ENCODE measurements at regions of chrX and their contacts with region 1.

Region 1: GRCh38 chrX:14883826-14884225 is 10.6 kb downstream of the MOSPD2 start:
- DNase-seq: no peak
- ATAC-seq: no peak
- H3K4me3 ChIP-seq: no peak overlapping the region
- H3K27ac ChIP-seq: no peak overlapping the region
- H3K4me1 ChIP-seq: no peaks in the 10 kb centered on the region
- H3K27me3 ChIP-seq: no peaks in the 10 kb centered on the region
- CTCF ChIP-seq: no peak

Region 2: DNA sequence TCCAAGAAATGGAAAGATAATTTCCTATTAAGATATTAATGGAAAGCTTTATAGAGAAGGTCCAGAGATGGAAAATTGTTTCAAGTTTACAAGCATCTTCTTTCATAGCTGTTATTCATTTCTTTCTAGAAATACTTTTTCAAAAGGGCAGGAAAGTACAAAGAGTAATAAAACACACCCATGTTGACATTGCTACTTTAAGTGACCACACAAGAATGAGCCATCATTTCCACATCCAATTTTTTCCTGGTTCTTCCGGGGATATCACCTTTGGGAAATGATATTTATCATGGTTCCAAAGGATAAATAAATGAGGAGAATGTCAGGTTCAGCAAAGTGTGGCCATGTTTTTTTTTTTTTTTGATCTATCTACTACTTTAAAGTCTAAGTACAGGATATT is 350.0 kb before region 1 on chrX:
- intact Hi-C with region 1: loop called in 1 of 2 experiments (anchors 5 kb)
- DNase-seq: no peak
- ATAC-seq: no peak
- H3K4me3 ChIP-seq: no peak overlapping the region
- H3K27ac ChIP-seq: no peak overlapping the region
- H3K4me1 ChIP-seq: no peaks in the 10 kb centered on the region
- H3K27me3 ChIP-seq: no peaks in the 10 kb centered on the region
- CTCF ChIP-seq: no peak